ENCODE measurements at regions of chr9 and their contacts with region 1.

Region 1: GRCh38 chr9:33043671-33044070 is 18.6 kb downstream of the DNAJA1 start:
- DNase-seq: no peak

Region 2: DNA sequence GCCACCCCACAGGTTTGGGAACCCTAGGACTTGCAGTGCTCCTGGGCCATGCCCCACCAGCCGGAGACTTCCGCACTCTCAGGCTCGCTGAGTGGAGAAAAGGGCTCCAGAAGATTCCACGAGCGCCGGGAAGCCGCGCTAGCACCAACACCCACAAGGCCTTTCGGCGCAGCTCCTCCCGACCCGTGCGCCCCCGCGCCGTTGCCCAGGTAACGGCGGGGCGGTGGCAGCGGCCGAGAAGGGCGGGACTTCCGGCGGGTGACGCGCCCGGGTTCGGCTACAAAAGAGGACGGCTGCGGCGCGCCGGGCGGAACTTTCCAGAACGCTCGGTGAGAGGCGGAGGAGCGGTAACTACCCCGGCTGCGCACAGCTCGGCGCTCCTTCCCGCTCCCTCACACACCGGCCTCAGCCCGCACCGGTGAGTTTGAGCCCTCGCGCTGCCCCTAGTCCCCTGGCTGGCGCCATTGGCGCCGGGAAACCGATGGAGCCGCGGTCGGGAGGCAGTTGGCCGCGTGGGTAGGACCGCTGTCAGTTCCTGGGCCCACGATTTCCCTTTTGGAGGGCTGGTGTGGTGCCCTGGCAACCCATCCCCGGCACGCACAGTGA is 18.6 kb before region 1 on chr9 and contains the start of gene DNAJA1:
- intact Hi-C with region 1: loop called (anchors 2 kb)
- DNase-seq: peak; percentile 92 to 100 (median 95)

Measured in posterior cingulate gyrus (tissue), 11 donors.